ENCODE measurements at regions of chr6 and their contacts with region 1.

Region 1: GRCh38 chr6:132483779-132484679 is 28.9 kb downstream of the STX7 start:
- DNase-seq: no peak
- ATAC-seq: peak; percentile 78 to 80
- H3K4me3 ChIP-seq: no peak overlapping the region
- H3K27ac ChIP-seq: no peak overlapping the region
- H3K4me1 ChIP-seq: no peaks in the 10 kb centered on the region
- H3K27me3 ChIP-seq: no peaks in the 10 kb centered on the region

Region 2: GRCh38 chr6:131923356-131923755 is 560.7 kb before region 1 on chr6:
- intact Hi-C with region 1: loop called in 1 of 4 experiments (anchors 10 kb)
- DNase-seq: peak in 2 of 3 donors; percentile 22 to 69
- ATAC-seq: peak; percentile 45 to 54
- H3K4me3 ChIP-seq: no peak overlapping the region
- H3K27ac ChIP-seq: no peak overlapping the region
- H3K4me1 ChIP-seq: no peaks in the 10 kb centered on the region
- H3K27me3 ChIP-seq: no peaks in the 10 kb centered on the region

Region 3: DNA sequence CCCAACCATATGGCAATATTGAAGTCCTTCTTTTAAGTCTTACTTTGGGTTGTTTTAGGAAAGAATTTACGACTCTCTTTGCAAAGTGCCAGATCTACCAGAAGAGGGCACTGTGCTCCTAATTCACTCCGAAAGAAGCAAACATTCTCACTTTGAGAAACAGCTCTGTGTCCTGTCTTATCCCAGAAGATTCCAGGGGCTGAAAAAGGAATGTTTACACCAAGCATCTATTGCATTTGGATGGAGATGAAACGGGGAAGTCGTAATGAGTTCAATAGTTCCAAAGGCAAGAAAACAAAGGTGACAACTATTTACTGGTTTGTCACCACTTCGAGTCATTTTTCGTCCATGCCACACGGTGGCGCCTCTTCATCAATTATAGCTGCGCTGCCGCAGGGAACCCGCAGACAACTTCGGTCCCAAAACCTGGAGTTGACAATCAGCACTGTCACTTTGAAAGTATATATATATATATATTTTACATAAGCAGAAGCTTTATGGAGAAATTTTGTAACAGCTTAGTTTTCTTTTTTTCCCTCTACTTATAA is 204.4 kb before region 1 on chr6:
- intact Hi-C with region 1: loop called in 2 of 4 experiments (anchors 10 kb)
- DNase-seq: peak; percentile 62 to 81 (median 81)
- ATAC-seq: peak; percentile 52 to 82
- H3K4me3 ChIP-seq: peak overlapping the region; percentile 51
- H3K27ac ChIP-seq: no peak overlapping the region
- H3K4me1 ChIP-seq: no peaks in the 10 kb centered on the region
- H3K27me3 ChIP-seq: no peaks in the 10 kb centered on the region

Region 4: GRCh38 chr6:132300323-132300949 is 183.6 kb before region 1 on chr6:
- intact Hi-C with region 1: loop called in 2 of 4 experiments (anchors 5 to 10 kb)
- DNase-seq: peak in 1 of 3 donors; percentile 38
- ATAC-seq: peak in 1 of 2 donors; percentile 63
- H3K4me3 ChIP-seq: no peak overlapping the region
- H3K27ac ChIP-seq: no peak overlapping the region
- H3K4me1 ChIP-seq: no peaks in the 10 kb centered on the region
- H3K27me3 ChIP-seq: no peaks in the 10 kb centered on the region

Measured in right cardiac atrium (tissue), 5 donors.